CD4-positive, alpha-beta T cell (primary cell): ENCODE measurements at regions of chr10 and their contacts with region 1.

Region 1: GRCh38 chr10:85719408-85719807 is 647.2 kb downstream of the GRID1 start:
- DNase-seq: no peak
- ATAC-seq: no peak
- H3K4me3 ChIP-seq: no peak overlapping the region
- H3K4me3 Mint-ChIP-seq: no peak overlapping the region
- H3K27ac ChIP-seq: no peak overlapping the region
- H3K27ac Mint-ChIP-seq: no peak overlapping the region
- H3K4me1 ChIP-seq: no peaks in the 10 kb centered on the region
- H3K4me1 Mint-ChIP-seq: no peaks in the 10 kb centered on the region
- H3K27me3 ChIP-seq: no peaks in the 10 kb centered on the region
- H3K27me3 Mint-ChIP-seq: no peaks in the 10 kb centered on the region
- CTCF ChIP-seq: no peak

Region 2: DNA sequence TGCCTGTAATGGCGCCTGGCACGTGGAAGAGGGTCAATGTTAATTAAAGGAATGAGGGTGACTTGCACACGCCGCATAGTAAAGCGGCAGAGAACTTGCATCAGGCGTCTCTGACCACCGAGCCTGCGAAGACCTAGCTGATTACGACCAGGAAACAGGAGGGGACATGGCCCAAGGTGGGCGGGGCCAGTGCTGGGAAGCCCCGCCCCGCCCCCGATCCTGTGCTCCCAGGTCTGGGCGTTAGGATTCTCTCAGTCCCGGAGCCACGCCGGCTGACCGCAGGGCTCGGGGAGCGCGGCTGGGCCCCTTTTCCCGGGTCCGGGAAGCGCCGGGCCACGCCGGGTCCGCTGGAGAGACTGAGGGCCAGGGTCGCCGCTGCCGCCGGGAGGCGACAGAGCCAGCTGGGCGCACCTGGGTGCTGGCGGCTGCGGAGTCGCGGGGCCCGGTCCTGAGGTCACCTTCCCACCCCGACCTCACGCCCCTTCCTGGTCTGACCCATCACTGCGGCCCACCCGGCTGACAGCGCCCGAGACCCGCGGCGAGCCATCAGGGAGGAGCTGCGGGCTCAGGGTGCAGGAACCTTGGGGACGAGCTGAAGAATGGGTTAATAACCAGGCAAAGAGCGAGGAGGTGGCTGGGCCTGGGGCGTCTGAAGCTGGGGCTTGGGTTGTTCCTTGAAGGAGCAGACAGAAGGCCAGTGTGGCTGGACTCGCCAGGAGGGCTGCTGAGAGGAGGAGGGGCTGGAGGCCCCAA is 670.2 kb after region 1 on chr10:
- CTCF ChIA-PET with region 1: no interaction called
- POLR2A ChIA-PET with region 1: no interaction called
- intact Hi-C with region 1: no loop called
- DNase-seq: peak in 3 of 14 experiments; percentile 35 to 41 (median 39)
- ATAC-seq: peak; percentile 58
- H3K4me3 ChIP-seq: peak overlapping the region; percentile 51
- H3K4me3 Mint-ChIP-seq: peak overlapping the region; percentile 87
- H3K27ac ChIP-seq: no peak overlapping the region
- H3K27ac Mint-ChIP-seq: no peak overlapping the region
- H3K4me1 ChIP-seq: peaks cover 12% of the 10 kb centered on the region
- H3K4me1 Mint-ChIP-seq: peaks cover 15% of the 10 kb centered on the region
- H3K27me3 ChIP-seq: peaks cover 13 to 20% of the 10 kb centered on the region in 2 experiments
- H3K27me3 Mint-ChIP-seq: peaks cover 48% of the 10 kb centered on the region
- CTCF ChIP-seq: no peak

Region 3: GRCh38 chr10:87560495-87561129 is 1841.2 kb after region 1 on chr10:
- CTCF ChIA-PET with region 1: no interaction called
- POLR2A ChIA-PET with region 1: no interaction called
- intact Hi-C with region 1: loop called in 1 of 2 experiments (anchors 10 kb)
- DNase-seq: no peak
- ATAC-seq: no peak
- H3K4me3 ChIP-seq: no peak overlapping the region
- H3K4me3 Mint-ChIP-seq: no peak overlapping the region
- H3K27ac ChIP-seq: no peak overlapping the region
- H3K27ac Mint-ChIP-seq: no peak overlapping the region
- H3K4me1 ChIP-seq: no peaks in the 10 kb centered on the region
- H3K4me1 Mint-ChIP-seq: no peaks in the 10 kb centered on the region
- H3K27me3 ChIP-seq: peaks cover 0 to 4% of the 10 kb centered on the region in 2 experiments
- H3K27me3 Mint-ChIP-seq: peaks cover 11% of the 10 kb centered on the region
- CTCF ChIP-seq: no peak